Posterior vena cava (tissue), 2 donors: ENCODE measurements at regions of chr6 and their contacts with region 1.

Region 1: GRCh38 chr6:4682431-4683097 is 93.6 kb upstream of the CDYL start:
- DNase-seq: no peak

Region 2: GRCh38 chr6:5229356-5229755 is 546.8 kb after region 1 on chr6:
- intact Hi-C with region 1: loop called in 1 of 2 experiments (anchors 5 kb)
- DNase-seq: no peak